ENCODE measurements at regions of chr13 and their contacts with region 1.

Region 1: DNA sequence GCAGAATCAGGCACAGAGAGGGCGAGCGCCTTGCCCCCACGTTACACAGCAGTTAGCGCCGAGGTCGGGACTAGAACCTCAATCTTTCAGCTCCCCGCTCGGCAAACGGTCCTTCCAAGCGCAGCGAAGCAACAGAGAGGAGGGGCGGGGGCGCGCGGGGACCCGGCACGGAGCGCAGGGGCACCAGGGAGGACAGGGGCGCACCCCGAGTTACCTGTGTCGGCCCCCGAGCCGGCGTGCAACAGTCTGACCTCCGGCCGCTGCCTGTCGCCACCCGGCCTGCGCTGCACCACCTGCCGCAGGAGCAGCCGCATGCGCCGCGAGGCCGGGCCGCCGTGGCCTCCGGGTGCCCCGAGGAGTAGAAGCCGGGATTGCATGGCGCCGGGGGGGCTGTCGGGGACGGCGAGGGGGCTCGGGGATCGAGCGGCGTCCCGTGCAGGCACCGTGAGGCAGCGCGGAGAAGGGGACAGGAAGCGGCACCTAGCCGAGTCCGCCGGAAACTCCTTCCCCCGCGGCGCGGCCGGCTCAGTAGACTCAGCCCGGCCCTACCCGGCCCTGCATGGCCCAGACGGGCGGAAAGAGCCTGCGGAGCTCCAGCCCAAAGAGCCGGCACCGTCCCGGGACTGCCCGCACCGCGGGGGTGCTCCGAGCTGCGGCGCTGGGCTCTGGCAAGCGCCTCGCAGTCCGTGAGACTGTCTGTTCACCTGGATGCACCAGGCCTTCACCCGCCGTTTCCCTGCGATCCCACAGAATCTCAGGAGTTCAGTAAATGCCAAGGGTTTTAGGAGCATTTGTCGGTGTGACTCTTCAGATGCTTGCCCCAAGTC is at the start of gene VWA8:
- DNase-seq: peak; percentile 87
- H3K4me3 Mint-ChIP-seq: peak within 1 kb of the TSS; percentile 92
- H3K27ac Mint-ChIP-seq: peak within 1 kb of the TSS; percentile 80
- H3K4me1 Mint-ChIP-seq: peaks cover 36% of the 10 kb centered on the region
- H3K27me3 Mint-ChIP-seq: no peaks in the 10 kb centered on the region
- total RNA-seq, gene VWA8: 13.5 to 14.4 TPM

Region 2: DNA sequence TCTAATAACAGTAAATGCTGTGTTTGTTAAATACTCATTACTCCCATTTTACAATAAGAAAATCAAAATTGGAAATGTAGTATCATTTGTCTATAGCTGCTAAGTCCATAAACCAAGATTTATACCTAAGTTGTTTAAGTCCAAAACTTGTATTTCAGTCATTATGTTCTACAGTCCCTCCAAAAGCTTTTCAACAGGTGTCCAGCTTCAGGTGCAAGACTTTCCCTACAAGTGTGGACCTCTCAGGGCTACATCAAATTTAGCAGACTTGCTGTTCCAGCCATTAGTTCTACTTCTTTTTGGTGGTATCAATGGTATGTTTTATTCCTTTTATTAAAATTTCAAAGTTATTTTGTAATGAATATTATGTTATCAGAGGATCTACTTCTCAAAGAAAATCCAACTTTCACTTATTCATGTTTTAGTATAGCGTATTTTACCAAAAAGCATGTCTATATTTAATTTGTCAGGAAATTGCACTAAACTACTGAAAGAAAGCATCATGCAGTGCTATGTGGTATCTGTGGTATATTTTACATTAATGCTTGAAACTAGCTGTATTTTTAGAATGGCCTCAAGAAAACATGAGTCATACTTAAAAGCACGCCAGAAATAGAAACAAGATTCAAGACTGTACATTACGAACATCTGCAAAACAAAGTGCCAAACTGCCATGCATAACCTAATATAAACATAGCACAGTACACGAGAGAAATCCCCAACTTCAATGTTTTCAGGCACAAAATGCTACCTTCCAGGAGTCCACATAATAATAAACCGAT is 44.5 kb before region 1 on chr13:
- CTCF ChIA-PET with region 1: interaction called, 5 read pairs
- POLR2A ChIA-PET with region 1: interaction called, 16 read pairs
- DNase-seq: no peak
- H3K4me3 Mint-ChIP-seq: peak overlapping the region; percentile 60
- H3K27ac Mint-ChIP-seq: peak overlapping the region; percentile 91
- H3K4me1 Mint-ChIP-seq: peaks cover 27% of the 10 kb centered on the region
- H3K27me3 Mint-ChIP-seq: no peaks in the 10 kb centered on the region

Region 3: DNA sequence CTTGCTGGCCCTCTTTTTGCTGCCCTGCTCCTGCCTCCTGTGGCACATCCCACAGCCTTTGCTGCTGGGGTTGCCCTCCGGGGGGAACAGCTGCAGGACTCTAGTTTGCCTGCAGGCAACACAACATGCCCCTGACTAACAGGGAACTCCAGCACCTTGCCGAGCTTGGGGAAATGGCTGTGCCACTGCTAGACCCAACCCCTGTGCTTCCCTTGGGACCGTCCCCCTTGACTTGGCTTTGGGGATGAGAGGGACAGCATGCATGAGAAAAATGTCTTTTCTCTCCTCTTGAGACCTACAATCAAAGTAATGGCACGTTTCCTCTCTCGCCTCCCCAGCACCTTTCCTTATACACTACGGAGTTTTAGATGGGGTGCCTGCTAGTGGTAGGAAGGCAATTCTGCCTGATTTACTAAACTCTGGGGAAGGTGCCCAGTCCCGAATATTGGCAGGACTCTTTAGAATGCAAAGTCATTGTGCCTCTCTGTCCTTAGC is 12.4 kb after region 1 on chr13:
- CTCF ChIA-PET with region 1: no interaction called
- POLR2A ChIA-PET with region 1: interaction called, 17 read pairs
- DNase-seq: no peak
- H3K4me3 Mint-ChIP-seq: no peak overlapping the region
- H3K27ac Mint-ChIP-seq: no peak overlapping the region
- H3K4me1 Mint-ChIP-seq: peaks cover 39% of the 10 kb centered on the region
- H3K27me3 Mint-ChIP-seq: peaks cover 3% of the 10 kb centered on the region